Activated CD4-positive, alpha-beta memory T cell treated with anti-CD3 and anti-CD28 coated beads for 36 hours (primary cell): ENCODE measurements at regions of chr2 and their contacts with region 1.

Region 1: GRCh38 chr2:216114714-216115557 is 5.8 kb downstream of the XRCC5 start:
- DNase-seq: peak; percentile 98
- H3K4me3 Mint-ChIP-seq: peak overlapping the region; percentile 86
- H3K27ac Mint-ChIP-seq: peak overlapping the region; percentile 100
- H3K4me1 Mint-ChIP-seq: peaks cover 93% of the 10 kb centered on the region
- H3K27me3 Mint-ChIP-seq: peaks cover 2% of the 10 kb centered on the region

Region 2: DNA sequence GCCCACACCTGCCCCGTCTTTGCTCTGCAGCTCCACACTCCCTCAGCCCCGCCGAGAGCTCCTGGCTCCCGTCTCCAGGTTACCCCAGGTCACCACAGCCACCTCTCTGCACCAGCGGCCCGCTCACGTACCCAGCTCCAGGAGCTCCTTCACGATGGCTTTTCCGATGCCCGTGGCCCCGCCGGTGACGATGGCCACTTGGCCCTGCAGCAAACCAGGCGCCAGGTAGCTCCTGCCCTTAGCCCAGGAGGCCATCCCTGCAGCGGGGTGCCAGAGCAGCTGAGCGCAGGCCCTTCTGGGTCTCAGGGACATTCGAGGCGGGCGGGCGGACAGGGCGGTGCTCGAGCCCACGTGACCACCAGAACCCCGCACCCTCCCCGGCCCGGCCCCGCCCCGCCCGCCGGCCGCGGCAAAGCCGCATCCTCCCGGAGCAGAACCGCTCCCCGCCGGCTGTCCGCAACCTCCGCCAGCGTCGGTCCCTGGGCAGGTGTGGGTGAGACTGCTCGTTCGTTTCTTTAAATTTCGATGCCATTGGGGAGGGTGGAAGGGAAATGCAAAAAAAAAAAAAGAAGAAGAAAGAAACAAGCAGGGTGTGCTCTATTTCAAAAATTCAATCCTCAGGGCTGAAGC is 33.3 kb before region 1 on chr2 and contains the starts of genes PECR and TMEM169:
- CTCF ChIA-PET with region 1: interaction called, 35 read pairs
- POLR2A ChIA-PET with region 1: interaction called, 9 read pairs
- intact Hi-C with region 1: no loop called
- DNase-seq: peak; percentile 87
- H3K4me3 Mint-ChIP-seq: peak within 1 kb of the TSS; percentile 96
- H3K27ac Mint-ChIP-seq: peak within 1 kb of the TSS; percentile 81
- H3K4me1 Mint-ChIP-seq: peaks cover 51% of the 10 kb centered on the region
- H3K27me3 Mint-ChIP-seq: no peaks in the 10 kb centered on the region
- total RNA-seq, gene PECR: 23.3 to 27.6 TPM
- total RNA-seq, gene TMEM169: 2.0 to 2.7 TPM

Region 3: DNA sequence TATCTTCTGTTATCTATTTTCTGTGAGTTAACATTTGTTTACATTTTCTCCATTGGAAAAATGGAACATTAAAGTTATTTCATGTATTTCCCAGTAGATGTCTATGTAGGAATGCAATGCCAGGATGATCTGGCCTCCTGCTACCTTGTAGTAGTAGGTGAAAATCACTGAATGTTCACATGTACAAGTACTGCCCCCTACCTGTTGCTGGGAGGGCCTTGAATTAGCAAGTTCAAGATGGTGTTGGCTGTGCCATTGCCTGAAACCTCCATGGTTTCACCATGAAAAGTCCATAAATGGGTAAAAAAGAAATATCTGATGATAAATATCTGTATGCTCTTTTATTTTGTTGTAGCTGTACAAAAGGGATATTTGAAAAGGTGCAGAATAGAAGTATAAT is 24.9 kb after region 1 on chr2:
- CTCF ChIA-PET with region 1: interaction called, 48 read pairs
- POLR2A ChIA-PET with region 1: interaction called, 3 read pairs
- intact Hi-C with region 1: loop called (anchors 1 kb)
- DNase-seq: peak; percentile 43
- H3K4me3 Mint-ChIP-seq: no peak overlapping the region
- H3K27ac Mint-ChIP-seq: no peak overlapping the region
- H3K4me1 Mint-ChIP-seq: peaks cover 23% of the 10 kb centered on the region
- H3K27me3 Mint-ChIP-seq: no peaks in the 10 kb centered on the region

Region 4: DNA sequence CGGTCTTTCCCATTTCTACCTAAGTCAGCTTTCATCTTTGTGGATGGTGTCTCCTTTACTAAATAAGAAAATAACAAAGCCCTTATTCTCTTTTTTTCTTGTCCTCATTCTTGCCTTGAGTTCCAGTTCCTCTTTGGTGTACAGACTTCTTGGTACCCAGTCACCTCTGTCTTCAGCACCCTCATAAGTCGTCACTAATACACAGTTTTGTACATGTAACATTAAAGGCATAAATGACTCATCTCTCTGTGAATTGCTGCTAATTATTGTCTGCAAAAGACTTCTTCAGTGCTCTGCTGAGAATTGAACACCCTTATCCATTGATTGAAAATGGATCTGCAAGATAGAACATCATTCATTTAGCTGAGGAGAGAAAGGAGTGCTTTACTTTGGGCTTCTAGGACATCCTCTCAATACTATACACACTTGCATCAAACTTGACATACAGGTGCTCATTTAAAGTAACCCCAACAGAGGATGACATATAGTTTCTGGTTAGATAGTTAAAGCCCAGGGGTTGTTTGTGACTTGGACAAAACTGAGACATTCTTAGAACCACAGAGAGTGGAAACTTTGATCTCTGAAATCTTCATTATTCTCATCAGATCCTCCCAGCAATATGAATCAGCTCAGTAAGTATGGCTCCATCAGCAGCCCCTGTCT is 91.2 kb after region 1 on chr2:
- CTCF ChIA-PET with region 1: interaction called, 6 read pairs
- POLR2A ChIA-PET with region 1: interaction called, 3 read pairs
- intact Hi-C with region 1: loop called (anchors 1 kb)
- DNase-seq: no peak
- H3K4me3 Mint-ChIP-seq: peak overlapping the region; percentile 9
- H3K27ac Mint-ChIP-seq: peak overlapping the region; percentile 92
- H3K4me1 Mint-ChIP-seq: peaks cover 63% of the 10 kb centered on the region
- H3K27me3 Mint-ChIP-seq: no peaks in the 10 kb centered on the region

Region 5: GRCh38 chr2:216257089-216257488 is 142.2 kb after region 1 on chr2:
- CTCF ChIA-PET with region 1: no interaction called
- POLR2A ChIA-PET with region 1: no interaction called
- intact Hi-C with region 1: no loop called
- DNase-seq: no peak
- H3K4me3 Mint-ChIP-seq: no peak overlapping the region
- H3K27ac Mint-ChIP-seq: no peak overlapping the region
- H3K4me1 Mint-ChIP-seq: no peaks in the 10 kb centered on the region
- H3K27me3 Mint-ChIP-seq: no peaks in the 10 kb centered on the region

Region 6: GRCh38 chr2:216498418-216499413 is 383.8 kb after region 1 on chr2 and contains the start of gene RPL37A:
- CTCF ChIA-PET with region 1: interaction called, 4 read pairs
- POLR2A ChIA-PET with region 1: no interaction called
- intact Hi-C with region 1: loop called (anchors 1 kb)
- DNase-seq: peak; percentile 93
- H3K4me3 Mint-ChIP-seq: peak within 1 kb of the TSS; percentile 97
- H3K27ac Mint-ChIP-seq: peak within 1 kb of the TSS; percentile 99
- H3K4me1 Mint-ChIP-seq: peaks cover 45% of the 10 kb centered on the region
- H3K27me3 Mint-ChIP-seq: no peaks in the 10 kb centered on the region
- total RNA-seq, gene RPL37A: 4,165 to 4,237 TPM